ENCODE measurements at regions of chrX and their contacts with region 1.

Region 1: GRCh38 chrX:100098660-100099375 is 311.3 kb downstream of the PCDH19 start:
- DNase-seq: no peak
- H3K4me3 ChIP-seq: no peak overlapping the region
- H3K27ac ChIP-seq: no peak overlapping the region
- H3K4me1 ChIP-seq: no peaks in the 10 kb centered on the region
- H3K27me3 ChIP-seq: no peaks in the 10 kb centered on the region
- CTCF ChIP-seq: no peak

Region 2: DNA sequence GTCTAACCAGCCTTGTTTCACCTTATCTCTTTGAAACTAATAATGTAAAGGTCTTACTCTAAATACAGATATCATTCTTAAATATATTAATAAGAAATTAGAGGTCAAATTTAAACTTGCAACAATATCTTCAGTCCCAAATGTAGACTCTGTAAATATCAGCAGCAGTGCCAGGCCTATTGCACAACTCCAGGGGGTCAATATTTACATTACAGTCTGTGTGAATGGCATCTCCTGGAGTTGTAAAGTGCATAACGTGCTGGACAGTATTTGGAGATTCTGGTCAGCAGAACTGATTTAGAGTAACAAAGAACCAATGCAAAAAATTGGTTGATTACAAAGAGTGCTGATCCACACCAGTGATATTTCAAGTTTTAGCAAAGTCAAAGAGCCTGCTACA is 914.7 kb before region 1 on chrX:
- CTCF ChIA-PET with region 1: no interaction called
- POLR2A ChIA-PET with region 1: no interaction called
- intact Hi-C with region 1: loop called (anchors 10 kb)
- DNase-seq: no peak
- H3K4me3 ChIP-seq: no peak overlapping the region
- H3K27ac ChIP-seq: no peak overlapping the region
- H3K4me1 ChIP-seq: no peaks in the 10 kb centered on the region
- H3K27me3 ChIP-seq: no peaks in the 10 kb centered on the region
- CTCF ChIP-seq: no peak

Region 3: GRCh38 chrX:100615005-100615404 is 516.2 kb after region 1 on chrX:
- CTCF ChIA-PET with region 1: no interaction called
- POLR2A ChIA-PET with region 1: no interaction called
- intact Hi-C with region 1: no loop called
- DNase-seq: peak; percentile 25 to 71
- H3K4me3 ChIP-seq: no peak overlapping the region
- H3K27ac ChIP-seq: no peak overlapping the region
- H3K4me1 ChIP-seq: 0 out of 2 replicates have a peak, but pooled peaks cover 8% of the 10 kb centered on the region
- H3K27me3 ChIP-seq: no peaks in the 10 kb centered on the region
- CTCF ChIP-seq: peak; percentile 67